MCF 10A (cell line): ENCODE measurements at regions of chr1 and their contacts with region 1.

Region 1: DNA sequence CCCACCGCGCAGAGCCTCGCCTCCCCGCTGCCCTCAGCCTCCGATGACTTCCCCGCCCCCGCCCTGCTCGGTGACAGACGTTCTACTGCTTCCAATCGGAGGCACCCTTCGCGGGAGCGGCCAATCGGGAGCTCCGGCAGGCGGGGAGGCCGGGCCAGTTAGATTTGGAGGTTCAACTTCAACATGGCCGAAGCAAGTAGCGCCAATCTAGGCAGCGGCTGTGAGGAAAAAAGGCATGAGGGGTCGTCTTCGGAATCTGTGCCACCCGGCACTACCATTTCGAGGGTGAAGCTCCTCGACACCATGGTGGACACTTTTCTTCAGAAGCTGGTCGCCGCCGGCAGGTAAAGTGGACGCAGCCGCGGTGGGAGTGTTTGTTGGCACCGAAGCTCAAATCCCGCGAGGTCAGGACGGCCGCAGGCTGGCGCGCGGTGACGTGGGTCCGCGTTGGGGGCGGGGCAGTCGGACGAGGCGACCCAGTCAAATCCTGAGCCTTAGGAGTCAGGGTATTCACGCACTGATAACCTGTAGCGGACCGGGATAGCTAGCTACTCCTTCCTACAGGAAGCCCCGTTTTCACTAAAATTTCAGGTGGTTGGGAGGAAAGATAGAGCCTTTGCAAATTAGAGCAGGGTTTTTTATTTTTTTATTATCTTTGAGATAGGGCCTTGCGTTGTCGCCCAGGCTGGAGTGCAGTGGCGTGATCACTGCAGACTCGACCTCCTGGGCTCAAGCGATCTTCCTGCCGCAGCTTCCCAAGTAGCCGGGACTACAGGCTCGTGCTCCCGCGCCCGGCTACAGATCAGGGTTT is at the start of gene PMF1:
- DNase-seq: peak; percentile 99
- H3K4me3 Mint-ChIP-seq: peak within 1 kb of the TSS; percentile 97
- H3K27ac Mint-ChIP-seq: peak within 1 kb of the TSS; percentile 96
- H3K4me1 Mint-ChIP-seq: peaks cover 21% of the 10 kb centered on the region
- H3K27me3 Mint-ChIP-seq: no peaks in the 10 kb centered on the region
- CTCF ChIP-seq: no peak
- total RNA-seq, gene PMF1: 51.0 and 77.7 TPM in 2 replicates

Region 2: GRCh38 chr1:156090822-156091188 is 122.2 kb before region 1 on chr1:
- CTCF ChIA-PET with region 1: interaction called, 524 read pairs
- POLR2A ChIA-PET with region 1: interaction called, 12 read pairs
- intact Hi-C with region 1: no loop called
- DNase-seq: peak; percentile 95
- H3K4me3 Mint-ChIP-seq: no peak overlapping the region
- H3K27ac Mint-ChIP-seq: no peak overlapping the region
- H3K4me1 Mint-ChIP-seq: peaks cover 8% of the 10 kb centered on the region
- H3K27me3 Mint-ChIP-seq: no peaks in the 10 kb centered on the region
- CTCF ChIP-seq: peak; percentile 98

Region 3: GRCh38 chr1:156104065-156104810 is 108.8 kb before region 1 on chr1:
- CTCF ChIA-PET with region 1: interaction called, 524 read pairs
- POLR2A ChIA-PET with region 1: interaction called, 16 read pairs
- intact Hi-C with region 1: no loop called
- DNase-seq: peak; percentile 94
- H3K4me3 Mint-ChIP-seq: peak overlapping the region; percentile 9
- H3K27ac Mint-ChIP-seq: peak overlapping the region; percentile 91
- H3K4me1 Mint-ChIP-seq: peaks cover 73% of the 10 kb centered on the region
- H3K27me3 Mint-ChIP-seq: no peaks in the 10 kb centered on the region
- CTCF ChIP-seq: no peak

Region 4: DNA sequence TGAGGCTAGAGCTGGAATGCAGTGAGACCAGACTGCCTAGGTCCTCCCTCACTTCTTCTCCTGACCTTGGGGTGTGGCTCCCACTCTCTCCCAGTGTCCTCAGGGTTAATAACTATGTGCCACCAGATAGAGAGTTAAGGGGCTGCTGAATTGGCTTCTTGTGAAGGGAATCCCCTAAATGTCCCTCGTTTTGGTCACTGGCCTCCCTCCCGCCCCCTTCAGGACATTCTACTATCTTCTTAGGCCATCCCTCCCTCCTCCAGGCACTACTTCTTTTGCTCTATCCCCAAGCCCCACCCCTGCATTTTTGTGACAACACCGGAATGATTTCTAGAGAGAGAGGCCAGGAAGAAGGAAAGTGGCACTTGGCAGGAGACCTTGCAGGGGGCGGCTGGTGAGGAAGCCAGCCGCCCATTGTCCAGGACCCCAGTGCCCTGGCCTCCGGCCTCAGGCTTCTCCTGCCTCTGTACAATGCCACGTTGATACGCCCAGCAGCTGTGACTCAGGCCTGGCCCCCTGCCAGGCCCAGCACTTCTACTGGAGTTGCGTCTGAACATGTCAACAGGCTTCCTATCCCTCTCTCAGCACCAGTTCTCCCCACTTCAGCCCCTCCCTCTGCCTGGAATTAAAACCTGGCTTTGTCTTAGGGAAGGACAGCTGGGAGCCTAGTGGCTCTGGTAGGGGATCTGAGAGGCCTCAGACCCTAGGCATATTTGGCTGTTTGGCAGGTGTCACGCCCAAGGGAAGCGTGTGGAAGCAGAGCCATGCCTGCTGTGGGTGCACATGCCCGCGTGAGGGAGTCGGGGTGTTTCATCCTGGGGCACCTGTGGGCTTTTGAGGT is 89.5 kb before region 1 on chr1:
- CTCF ChIA-PET with region 1: interaction called, 18 read pairs
- POLR2A ChIA-PET with region 1: interaction called, 57 read pairs
- intact Hi-C with region 1: no loop called
- DNase-seq: peak; percentile 100
- H3K4me3 Mint-ChIP-seq: peak overlapping the region; percentile 79
- H3K27ac Mint-ChIP-seq: peak overlapping the region; percentile 96
- H3K4me1 Mint-ChIP-seq: peaks cover 85% of the 10 kb centered on the region
- H3K27me3 Mint-ChIP-seq: no peaks in the 10 kb centered on the region
- CTCF ChIP-seq: peak; percentile 34

Region 5: GRCh38 chr1:156193488-156194299 is 19.3 kb before region 1 on chr1 and contains the start of gene SLC25A44:
- CTCF ChIA-PET with region 1: interaction called, 9 read pairs
- POLR2A ChIA-PET with region 1: interaction called, 131 read pairs
- intact Hi-C with region 1: no loop called
- DNase-seq: peak; percentile 100
- H3K4me3 Mint-ChIP-seq: peak within 1 kb of the TSS; percentile 96
- H3K27ac Mint-ChIP-seq: peak within 1 kb of the TSS; percentile 90
- H3K4me1 Mint-ChIP-seq: peaks cover 16% of the 10 kb centered on the region
- H3K27me3 Mint-ChIP-seq: no peaks in the 10 kb centered on the region
- CTCF ChIP-seq: peak; percentile 49
- total RNA-seq, gene SLC25A44: 28.7 and 32.3 TPM in 2 replicates

Region 6: DNA sequence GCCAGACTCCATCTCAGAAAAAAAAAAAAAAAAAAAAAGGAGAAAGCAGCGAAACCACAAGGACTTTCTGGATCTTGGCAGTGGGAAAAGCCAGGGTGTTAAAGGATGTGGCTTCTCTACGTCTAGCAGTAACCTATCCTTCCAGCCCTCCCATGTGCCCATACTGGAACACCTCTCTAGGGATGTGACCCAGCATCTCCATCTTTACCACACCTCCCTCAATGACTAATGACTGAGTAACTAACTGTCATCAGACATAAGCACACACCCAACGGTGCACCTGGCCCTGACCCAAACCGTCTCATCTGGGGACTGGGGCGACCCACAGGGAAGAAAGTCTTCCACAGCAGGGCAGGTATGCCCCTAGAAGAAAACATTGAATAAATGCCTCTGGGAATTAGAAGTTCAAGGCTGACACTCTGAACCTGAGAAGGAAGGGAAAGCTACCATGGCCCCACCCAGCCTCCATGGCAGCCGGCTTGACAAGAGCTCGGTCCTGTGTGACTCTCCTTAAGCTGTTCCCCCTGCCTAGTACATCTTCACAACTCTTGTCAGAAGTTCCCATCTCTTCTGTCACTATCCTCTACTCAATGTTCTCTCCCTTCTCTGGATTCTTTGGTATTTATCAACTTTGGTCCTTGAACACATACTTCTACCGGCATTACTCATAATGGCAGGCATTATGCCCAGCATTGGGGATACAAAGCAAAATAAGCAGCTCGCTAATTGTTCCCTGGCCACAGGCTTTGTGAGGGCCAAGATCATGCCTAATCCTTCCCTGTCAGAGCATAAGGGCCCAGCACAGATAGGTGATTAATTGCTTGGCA is 49.6 kb after region 1 on chr1:
- CTCF ChIA-PET with region 1: interaction called, 3 read pairs
- POLR2A ChIA-PET with region 1: interaction called, 17 read pairs
- intact Hi-C with region 1: no loop called
- DNase-seq: peak; percentile 90
- H3K4me3 Mint-ChIP-seq: peak overlapping the region; percentile 13
- H3K27ac Mint-ChIP-seq: peak overlapping the region; percentile 92
- H3K4me1 Mint-ChIP-seq: peaks cover 40% of the 10 kb centered on the region
- H3K27me3 Mint-ChIP-seq: no peaks in the 10 kb centered on the region
- CTCF ChIP-seq: no peak

Region 7: GRCh38 chr1:156540791-156541383 is 327.8 kb after region 1 on chr1:
- CTCF ChIA-PET with region 1: no interaction called
- POLR2A ChIA-PET with region 1: no interaction called
- intact Hi-C with region 1: no loop called
- DNase-seq: no peak
- H3K4me3 Mint-ChIP-seq: no peak overlapping the region
- H3K27ac Mint-ChIP-seq: no peak overlapping the region
- H3K4me1 Mint-ChIP-seq: no peaks in the 10 kb centered on the region
- H3K27me3 Mint-ChIP-seq: no peaks in the 10 kb centered on the region
- CTCF ChIP-seq: no peak

Region 8: DNA sequence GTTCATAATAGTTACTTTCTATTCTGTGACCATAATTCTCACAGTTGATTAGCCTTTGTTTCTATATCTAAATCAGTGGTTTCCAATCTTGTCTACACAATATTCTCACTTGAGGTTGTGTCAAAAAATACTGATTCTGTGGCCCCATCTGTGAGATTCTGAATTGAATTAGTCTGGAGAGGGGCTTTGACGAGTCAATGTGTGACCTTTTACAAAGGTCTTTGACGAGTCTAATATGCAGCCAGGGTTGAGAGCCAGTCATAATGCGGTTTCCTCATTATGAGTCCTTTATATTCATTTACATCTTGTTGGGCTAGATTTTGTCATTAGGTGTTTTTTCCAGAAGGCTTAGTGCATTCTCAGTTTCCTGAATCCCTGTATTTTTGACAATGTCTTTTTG is 1319.5 kb after region 1 on chr1:
- CTCF ChIA-PET with region 1: no interaction called
- POLR2A ChIA-PET with region 1: no interaction called
- intact Hi-C with region 1: no loop called
- DNase-seq: no peak
- H3K4me3 Mint-ChIP-seq: no peak overlapping the region
- H3K27ac Mint-ChIP-seq: no peak overlapping the region
- H3K4me1 Mint-ChIP-seq: no peaks in the 10 kb centered on the region
- H3K27me3 Mint-ChIP-seq: peaks cover 63% of the 10 kb centered on the region
- CTCF ChIP-seq: no peak